ENCODE measurements at regions of chr3 and their contacts with region 1.

Region 1: GRCh38 chr3:57852896-57853295 is 96.8 kb downstream of the SLMAP start:
- DNase-seq: no peak
- H3K4me3 ChIP-seq: no peak overlapping the region
- CTCF ChIP-seq: peak; percentile 5

Region 2: GRCh38 chr3:57397175-57398026 is 455.5 kb before region 1 on chr3:
- CTCF ChIA-PET with region 1: interaction called, 54 read pairs
- POLR2A ChIA-PET with region 1: no interaction called
- DNase-seq: no peak
- H3K4me3 ChIP-seq: no peak overlapping the region
- CTCF ChIP-seq: peak; percentile 81

Region 3: DNA sequence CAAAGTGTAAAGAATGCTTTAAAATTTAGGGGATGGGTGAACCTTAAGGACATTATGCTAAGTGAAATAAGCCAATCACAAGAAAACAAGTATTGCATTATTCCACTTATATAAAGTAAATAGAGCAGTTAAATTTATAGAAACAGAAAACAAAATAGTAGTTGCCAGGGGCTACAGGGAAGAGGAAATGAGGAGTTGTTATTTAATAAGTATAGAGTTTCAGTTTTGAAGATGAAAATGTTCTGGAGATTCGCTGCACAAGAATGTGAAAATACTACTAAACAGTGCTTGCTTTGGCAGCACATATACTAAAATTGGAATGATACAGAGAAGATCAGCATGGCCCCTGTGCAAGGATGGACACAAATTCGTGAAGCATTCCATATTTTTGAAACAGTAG is 340.7 kb before region 1 on chr3:
- CTCF ChIA-PET with region 1: no interaction called
- POLR2A ChIA-PET with region 1: no interaction called
- DNase-seq: peak; percentile 2
- H3K4me3 ChIP-seq: no peak overlapping the region
- CTCF ChIP-seq: no peak

Region 4: DNA sequence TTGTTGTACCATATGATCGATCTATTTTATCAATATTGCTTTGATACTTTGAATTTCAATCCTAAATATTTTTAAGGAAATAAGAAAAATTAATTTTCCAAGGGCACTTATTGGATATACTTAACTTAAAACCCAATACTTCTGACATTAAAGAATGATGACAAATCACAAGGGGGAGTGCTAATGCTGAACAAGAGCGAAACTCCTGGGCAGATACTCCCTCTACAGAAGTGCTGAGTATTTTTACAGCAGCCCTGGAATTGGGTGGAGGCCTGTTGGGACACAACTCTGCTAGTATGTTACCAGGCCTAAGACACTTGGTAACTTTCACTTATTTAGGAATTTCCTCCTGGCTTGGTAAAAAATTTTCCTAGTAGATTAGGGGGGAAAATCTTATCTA is 206.2 kb before region 1 on chr3:
- CTCF ChIA-PET with region 1: interaction called, 16 read pairs
- POLR2A ChIA-PET with region 1: no interaction called
- DNase-seq: no peak
- H3K4me3 ChIP-seq: no peak overlapping the region
- CTCF ChIP-seq: no peak

Region 5: GRCh38 chr3:57826245-57826951 is 26.5 kb before region 1 on chr3:
- CTCF ChIA-PET with region 1: interaction called, 12 read pairs
- POLR2A ChIA-PET with region 1: no interaction called
- DNase-seq: no peak
- H3K4me3 ChIP-seq: no peak overlapping the region
- CTCF ChIP-seq: no peak

Region 6: DNA sequence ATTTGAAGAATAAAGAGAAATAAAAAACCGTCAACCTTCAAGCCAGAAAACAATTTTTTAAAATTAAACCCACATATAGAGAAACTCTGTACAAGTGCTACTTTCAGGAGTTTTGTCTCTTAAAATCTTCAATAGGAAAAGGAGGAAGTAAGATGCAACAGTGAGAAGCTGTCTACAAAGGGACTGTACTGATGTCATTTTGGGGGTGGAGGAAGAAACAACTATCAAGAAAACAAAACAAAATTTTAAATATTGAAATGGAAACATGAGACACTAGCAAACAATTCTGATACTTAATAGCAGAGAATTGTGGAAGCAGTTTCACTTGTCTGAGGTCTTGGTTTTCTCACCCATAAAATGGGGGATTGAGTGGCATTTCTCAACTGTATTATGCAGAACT is 12.4 kb before region 1 on chr3:
- CTCF ChIA-PET with region 1: interaction called, 36 read pairs
- POLR2A ChIA-PET with region 1: no interaction called
- DNase-seq: no peak
- H3K4me3 ChIP-seq: no peak overlapping the region
- CTCF ChIP-seq: no peak

Measured in AG04449 (cell line).